ENCODE measurements at regions of chr11 and their contacts with region 1.

Region 1: DNA sequence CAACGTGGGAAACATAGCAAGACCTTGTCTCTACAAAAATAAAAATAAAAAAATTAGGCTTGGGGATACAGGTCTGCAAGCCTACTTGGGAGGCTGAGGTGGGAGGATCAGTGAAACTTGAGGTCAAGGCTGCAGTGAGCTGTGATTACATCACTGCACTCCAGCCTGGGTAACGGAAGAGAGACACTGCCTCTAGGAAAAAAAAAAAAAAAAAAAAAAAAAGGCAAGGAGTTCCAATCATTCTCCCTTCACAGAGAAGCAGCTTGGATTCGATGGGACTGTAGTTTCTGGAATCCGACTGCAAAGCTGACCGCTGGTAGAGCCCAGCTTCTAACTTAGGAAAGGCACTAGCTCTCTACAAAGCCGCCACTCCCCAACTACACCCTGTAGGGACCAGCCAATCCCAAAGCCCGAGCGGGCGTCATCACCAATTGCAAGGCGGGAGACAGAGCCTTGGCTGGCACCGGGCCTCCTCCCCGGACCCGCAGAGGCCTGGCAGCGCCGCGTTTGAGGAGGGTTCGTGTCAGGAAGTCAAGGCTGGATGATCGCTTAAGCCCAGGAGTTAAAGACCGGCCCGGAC is 699 bp upstream of the DDB2 start:
- DNase-seq: peak; percentile 95
- H3K4me3 Mint-ChIP-seq: peak overlapping the region; percentile 87
- H3K27ac Mint-ChIP-seq: peak overlapping the region; percentile 97
- H3K4me1 Mint-ChIP-seq: peaks cover 30% of the 10 kb centered on the region
- H3K27me3 Mint-ChIP-seq: no peaks in the 10 kb centered on the region

Region 2: GRCh38 chr11:45917623-45918330 is 1296.3 kb before region 1 on chr11 and contains the start of gene PEX16:
- CTCF ChIA-PET with region 1: no interaction called
- intact Hi-C with region 1: loop called (anchors 10 kb)
- DNase-seq: peak; percentile 96
- H3K4me3 Mint-ChIP-seq: peak within 1 kb of the TSS; percentile 88
- H3K27ac Mint-ChIP-seq: peak within 1 kb of the TSS; percentile 96
- H3K4me1 Mint-ChIP-seq: peaks cover 24% of the 10 kb centered on the region
- H3K27me3 Mint-ChIP-seq: peaks cover 3% of the 10 kb centered on the region
- total RNA-seq, gene PEX16: 28.6 to 32.5 TPM

Region 3: GRCh38 chr11:46886215-46886614 is 327.9 kb before region 1 on chr11:
- CTCF ChIA-PET with region 1: no interaction called
- intact Hi-C with region 1: no loop called
- DNase-seq: no peak
- H3K4me3 Mint-ChIP-seq: no peak overlapping the region
- H3K27ac Mint-ChIP-seq: no peak overlapping the region
- H3K4me1 Mint-ChIP-seq: peaks cover 2% of the 10 kb centered on the region
- H3K27me3 Mint-ChIP-seq: no peaks in the 10 kb centered on the region

Region 4: GRCh38 chr11:47225552-47226400 is 11.7 kb after region 1 on chr11:
- CTCF ChIA-PET with region 1: no interaction called
- intact Hi-C with region 1: loop called (anchors 1 kb)
- DNase-seq: peak; percentile 57
- H3K4me3 Mint-ChIP-seq: no peak overlapping the region
- H3K27ac Mint-ChIP-seq: peak overlapping the region; percentile 19
- H3K4me1 Mint-ChIP-seq: peaks cover 25% of the 10 kb centered on the region
- H3K27me3 Mint-ChIP-seq: no peaks in the 10 kb centered on the region

Region 5: GRCh38 chr11:47269002-47269828 is 55.1 kb after region 1 on chr11:
- CTCF ChIA-PET with region 1: no interaction called
- intact Hi-C with region 1: loop called (anchors 1 kb)
- DNase-seq: peak; percentile 91
- H3K4me3 Mint-ChIP-seq: peak overlapping the region; percentile 85
- H3K27ac Mint-ChIP-seq: peak overlapping the region; percentile 98
- H3K4me1 Mint-ChIP-seq: peaks cover 55% of the 10 kb centered on the region
- H3K27me3 Mint-ChIP-seq: no peaks in the 10 kb centered on the region

Region 6: GRCh38 chr11:47359586-47359985 is 145.5 kb after region 1 on chr11:
- CTCF ChIA-PET with region 1: no interaction called
- intact Hi-C with region 1: no loop called
- DNase-seq: peak; percentile 18
- H3K4me3 Mint-ChIP-seq: no peak overlapping the region
- H3K27ac Mint-ChIP-seq: no peak overlapping the region
- H3K4me1 Mint-ChIP-seq: peaks cover 17% of the 10 kb centered on the region
- H3K27me3 Mint-ChIP-seq: no peaks in the 10 kb centered on the region

Region 7: DNA sequence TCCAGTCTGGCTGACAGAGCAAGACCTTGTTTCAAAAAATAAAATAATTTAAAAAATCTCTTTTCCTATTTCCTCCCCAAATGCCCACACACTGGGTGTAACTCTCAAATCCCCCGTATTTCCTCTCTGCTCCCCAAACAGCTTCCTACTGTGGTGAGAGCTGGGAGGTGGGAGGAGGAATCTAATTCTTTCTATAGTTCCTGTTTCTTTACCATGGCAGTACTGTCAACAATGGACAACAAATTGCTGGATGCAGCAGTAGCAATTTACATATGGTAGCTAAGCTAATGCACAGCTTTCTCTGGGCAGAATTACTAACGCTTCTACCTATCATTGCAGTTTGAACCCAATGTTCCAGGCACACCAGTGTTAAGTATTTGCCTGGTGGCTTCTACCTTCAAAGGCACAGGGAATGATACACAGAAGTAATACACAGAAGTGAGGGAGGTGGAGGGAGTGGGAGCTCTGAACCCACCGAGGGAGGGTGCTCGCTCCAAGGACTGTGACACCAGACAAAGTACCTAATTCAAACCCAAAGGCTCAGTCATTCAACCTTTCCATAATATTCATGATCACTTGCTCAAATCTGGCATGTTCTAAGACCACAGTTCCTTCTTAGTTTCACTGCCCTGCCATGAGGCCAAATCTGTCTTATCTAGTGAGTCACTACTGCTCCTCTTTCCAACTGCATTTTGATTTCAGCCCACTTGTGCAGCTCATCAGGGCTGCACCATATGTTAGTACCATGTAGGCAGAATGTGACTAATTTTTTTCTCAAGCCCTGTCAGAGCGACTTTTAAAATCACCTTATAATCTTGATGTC is 301.0 kb after region 1 on chr11:
- CTCF ChIA-PET with region 1: no interaction called
- intact Hi-C with region 1: loop called (anchors 2 kb)
- DNase-seq: peak; percentile 66
- H3K4me3 Mint-ChIP-seq: no peak overlapping the region
- H3K27ac Mint-ChIP-seq: peak overlapping the region; percentile 28
- H3K4me1 Mint-ChIP-seq: peaks cover 95% of the 10 kb centered on the region
- H3K27me3 Mint-ChIP-seq: no peaks in the 10 kb centered on the region

Region 8: GRCh38 chr11:47631473-47631872 is 417.4 kb after region 1 on chr11:
- CTCF ChIA-PET with region 1: no interaction called
- intact Hi-C with region 1: no loop called
- DNase-seq: no peak
- H3K4me3 Mint-ChIP-seq: no peak overlapping the region
- H3K27ac Mint-ChIP-seq: no peak overlapping the region
- H3K4me1 Mint-ChIP-seq: no peaks in the 10 kb centered on the region
- H3K27me3 Mint-ChIP-seq: no peaks in the 10 kb centered on the region

Region 9: DNA sequence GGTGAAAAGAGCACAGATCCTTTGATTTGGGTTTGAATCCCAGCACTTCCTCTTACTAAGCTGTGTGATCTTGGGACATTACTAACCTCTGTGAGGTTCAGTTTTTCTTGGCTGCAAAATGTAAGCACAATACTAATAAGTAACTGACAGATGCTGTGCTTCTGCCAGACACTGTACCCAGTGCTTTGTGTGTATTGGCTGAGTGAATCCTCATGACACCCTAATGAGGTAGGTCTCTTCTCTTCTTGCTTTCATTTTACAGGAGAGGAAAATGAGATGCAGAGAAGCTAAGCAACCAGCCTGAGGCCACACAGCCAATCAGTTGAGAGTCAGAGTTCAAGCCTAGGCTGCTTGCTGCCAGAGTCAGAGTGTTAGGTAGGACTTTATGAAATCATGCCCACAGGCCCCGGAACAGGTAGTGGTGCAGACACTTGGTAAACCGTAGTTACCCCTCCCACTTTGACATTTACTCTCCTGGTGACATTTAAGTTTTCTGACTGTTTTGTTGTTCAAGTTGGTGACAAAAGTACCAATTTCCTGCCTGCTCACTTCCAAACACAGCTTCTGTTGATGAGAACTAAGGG is 787.5 kb after region 1 on chr11:
- CTCF ChIA-PET with region 1: no interaction called
- intact Hi-C with region 1: loop called (anchors 5 kb)
- DNase-seq: peak; percentile 89
- H3K4me3 Mint-ChIP-seq: peak overlapping the region; percentile 66
- H3K27ac Mint-ChIP-seq: peak overlapping the region; percentile 96
- H3K4me1 Mint-ChIP-seq: peaks cover 88% of the 10 kb centered on the region
- H3K27me3 Mint-ChIP-seq: no peaks in the 10 kb centered on the region

Measured in activated naive CD4-positive, alpha-beta T cell treated with anti-CD3 and anti-CD28 coated beads for 36 hours (primary cell).